ENCODE measurements at regions of chr14 and their contacts with region 1.

Region 1: GRCh38 chr14:75307700-75308379 is 29.2 kb downstream of the FOS start:
- DNase-seq: peak; percentile 88
- H3K4me3 Mint-ChIP-seq: no peak overlapping the region
- H3K27ac Mint-ChIP-seq: no peak overlapping the region
- H3K4me1 Mint-ChIP-seq: peaks cover 11% of the 10 kb centered on the region
- H3K27me3 Mint-ChIP-seq: no peaks in the 10 kb centered on the region

Region 2: GRCh38 chr14:74860906-74861733 is 446.7 kb before region 1 on chr14:
- CTCF ChIA-PET with region 1: interaction called, 7 read pairs
- intact Hi-C with region 1: loop called (anchors 2 kb)
- DNase-seq: peak; percentile 97
- H3K4me3 Mint-ChIP-seq: no peak overlapping the region
- H3K27ac Mint-ChIP-seq: no peak overlapping the region
- H3K4me1 Mint-ChIP-seq: peaks cover 2% of the 10 kb centered on the region
- H3K27me3 Mint-ChIP-seq: no peaks in the 10 kb centered on the region

Region 3: DNA sequence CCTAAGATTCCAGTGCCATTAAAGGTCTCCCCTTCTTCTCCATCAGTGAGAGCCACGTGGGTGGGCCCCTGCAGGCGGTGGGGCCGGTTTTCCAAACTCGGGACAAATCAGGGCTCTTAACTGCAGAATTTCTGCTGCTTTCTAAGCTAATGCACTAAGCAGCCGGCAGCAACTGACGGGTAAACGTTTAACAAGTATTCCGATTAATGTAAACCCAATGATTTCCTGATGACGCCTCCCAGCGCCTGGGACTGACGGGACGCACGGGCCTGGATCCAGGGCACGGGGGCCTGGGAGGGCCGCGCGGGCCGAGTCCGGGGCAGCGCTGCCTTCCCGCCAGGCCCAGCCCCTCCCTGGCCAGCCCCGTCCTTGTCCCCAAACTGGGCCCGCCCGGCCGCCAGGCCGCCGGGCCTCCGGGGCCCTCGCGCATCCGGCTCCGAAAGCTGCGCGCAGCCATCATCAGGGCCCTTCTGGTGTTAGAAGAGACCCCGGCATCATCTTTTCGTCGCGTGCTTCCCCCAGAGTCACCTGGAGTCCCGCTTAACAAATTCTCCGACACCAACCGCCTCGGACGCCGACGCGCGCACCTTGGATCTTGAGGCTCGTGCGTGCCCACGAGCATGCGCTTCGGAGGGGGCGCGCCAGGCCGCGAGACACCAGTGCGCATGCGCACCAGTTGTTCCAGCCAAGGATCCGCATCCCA is 256.8 kb before region 1 on chr14 and contains the start of gene MLH3:
- CTCF ChIA-PET with region 1: no interaction called
- intact Hi-C with region 1: loop called (anchors 5 kb)
- DNase-seq: peak; percentile 77
- H3K4me3 Mint-ChIP-seq: peak within 1 kb of the TSS; percentile 92
- H3K27ac Mint-ChIP-seq: peak within 1 kb of the TSS; percentile 86
- H3K4me1 Mint-ChIP-seq: peaks cover 66% of the 10 kb centered on the region
- H3K27me3 Mint-ChIP-seq: no peaks in the 10 kb centered on the region
- total RNA-seq, gene MLH3: 17.3 to 18.5 TPM

Region 4: GRCh38 chr14:75249251-75249957 is 58.4 kb before region 1 on chr14:
- CTCF ChIA-PET with region 1: no interaction called
- intact Hi-C with region 1: no loop called
- DNase-seq: peak; percentile 90
- H3K4me3 Mint-ChIP-seq: no peak overlapping the region
- H3K27ac Mint-ChIP-seq: peak overlapping the region; percentile 66
- H3K4me1 Mint-ChIP-seq: peaks cover 54% of the 10 kb centered on the region
- H3K27me3 Mint-ChIP-seq: no peaks in the 10 kb centered on the region

Region 5: GRCh38 chr14:75293920-75294642 is 13.8 kb before region 1 on chr14:
- CTCF ChIA-PET with region 1: interaction called, 10 read pairs
- intact Hi-C with region 1: loop called (anchors 1 kb)
- DNase-seq: peak; percentile 91
- H3K4me3 Mint-ChIP-seq: peak overlapping the region; percentile 80
- H3K27ac Mint-ChIP-seq: no peak overlapping the region
- H3K4me1 Mint-ChIP-seq: peaks cover 20% of the 10 kb centered on the region
- H3K27me3 Mint-ChIP-seq: peaks cover 3% of the 10 kb centered on the region

Region 6: GRCh38 chr14:75487155-75487671 is 179.4 kb after region 1 on chr14:
- CTCF ChIA-PET with region 1: interaction called, 131 read pairs
- intact Hi-C with region 1: loop called (anchors 1 kb)
- DNase-seq: peak; percentile 35
- H3K4me3 Mint-ChIP-seq: no peak overlapping the region
- H3K27ac Mint-ChIP-seq: no peak overlapping the region
- H3K4me1 Mint-ChIP-seq: peaks cover 22% of the 10 kb centered on the region
- H3K27me3 Mint-ChIP-seq: peaks cover 3% of the 10 kb centered on the region

Region 7: GRCh38 chr14:75654127-75654732 is 346.4 kb after region 1 on chr14:
- CTCF ChIA-PET with region 1: interaction called, 10 read pairs
- intact Hi-C with region 1: loop called (anchors 1 kb)
- DNase-seq: peak; percentile 93
- H3K4me3 Mint-ChIP-seq: no peak overlapping the region
- H3K27ac Mint-ChIP-seq: no peak overlapping the region
- H3K4me1 Mint-ChIP-seq: peaks cover 6% of the 10 kb centered on the region
- H3K27me3 Mint-ChIP-seq: no peaks in the 10 kb centered on the region